Heart right ventricle (tissue), 16 donors: ENCODE measurements at regions of chr7 and their contacts with region 1.

Region 1: GRCh38 chr7:138515001-138515528 is 55.0 kb downstream of the TRIM24 start:
- DNase-seq: no peak
- ATAC-seq: no peak
- H3K4me3 ChIP-seq: no peak overlapping the region
- H3K27ac ChIP-seq: no peak overlapping the region
- H3K4me1 ChIP-seq: peaks cover 0 to 21% (median 8%) of the 10 kb centered on the region in 9 donors
- H3K27me3 ChIP-seq: no peaks in the 10 kb centered on the region
- CTCF ChIP-seq: no peak

Region 2: GRCh38 chr7:138116141-138116540 is 398.9 kb before region 1 on chr7:
- intact Hi-C with region 1: no loop called
- DNase-seq: no peak
- ATAC-seq: no peak
- H3K4me3 ChIP-seq: no peak overlapping the region
- H3K27ac ChIP-seq: no peak overlapping the region
- H3K4me1 ChIP-seq: no peaks in the 10 kb centered on the region
- H3K27me3 ChIP-seq: peaks cover 0 to 6% (median 0%) of the 10 kb centered on the region in 7 donors
- CTCF ChIP-seq: no peak

Region 3: GRCh38 chr7:138407792-138408191 is 107.3 kb before region 1 on chr7:
- intact Hi-C with region 1: no loop called
- DNase-seq: no peak
- ATAC-seq: peak in 3 of 8 donors; percentile 46 to 79 (median 59)
- H3K4me3 ChIP-seq: no peak overlapping the region
- H3K27ac ChIP-seq: peak overlapping the region in 1 of 10 donors; percentile 28
- H3K4me1 ChIP-seq: peaks cover 0 to 10% (median 3%) of the 10 kb centered on the region in 9 donors
- H3K27me3 ChIP-seq: no peaks in the 10 kb centered on the region
- CTCF ChIP-seq: no peak

Region 4: DNA sequence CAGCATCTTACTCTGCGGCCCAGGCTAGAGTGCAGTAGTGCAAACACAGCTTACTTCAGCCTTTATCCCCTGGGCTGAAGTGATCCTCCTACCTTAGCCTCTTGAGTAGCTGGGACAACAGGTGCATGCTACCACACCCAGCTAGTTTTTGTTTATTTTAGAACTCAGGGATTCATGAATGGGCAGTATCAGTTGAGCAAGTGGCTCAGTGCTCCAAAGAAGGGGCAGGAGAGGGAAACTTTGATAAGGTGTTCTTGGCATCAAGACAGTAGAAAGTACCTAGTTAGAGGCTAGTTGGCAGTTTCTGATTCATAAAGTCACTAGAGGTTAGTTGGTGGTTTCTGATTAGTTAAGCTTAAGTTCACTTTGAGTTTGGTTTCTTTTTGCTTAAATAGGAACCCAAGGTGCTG is 36.6 kb before region 1 on chr7:
- intact Hi-C with region 1: no loop called
- DNase-seq: no peak
- ATAC-seq: peak in 4 of 8 donors; percentile 35 to 55 (median 50)
- H3K4me3 ChIP-seq: no peak overlapping the region
- H3K27ac ChIP-seq: no peak overlapping the region
- H3K4me1 ChIP-seq: peaks cover 0 to 56% (median 20%) of the 10 kb centered on the region in 9 donors
- H3K27me3 ChIP-seq: no peaks in the 10 kb centered on the region
- CTCF ChIP-seq: no peak

Region 5: GRCh38 chr7:138565451-138566114 is 50.5 kb after region 1 on chr7:
- intact Hi-C with region 1: loop called in 1 of 10 experiments (anchors 10 kb)
- DNase-seq: no peak
- ATAC-seq: no peak
- H3K4me3 ChIP-seq: peak overlapping the region in 1 of 10 donors; percentile 23
- H3K27ac ChIP-seq: peak overlapping the region in 2 of 10 donors; percentile 18 to 75
- H3K4me1 ChIP-seq: peaks cover 0 to 5% (median 0%) of the 10 kb centered on the region in 9 donors
- H3K27me3 ChIP-seq: no peaks in the 10 kb centered on the region
- CTCF ChIP-seq: no peak